Mucosa of descending colon (tissue), 3 donors: ENCODE measurements at regions of chr1 and their contacts with region 1.

Region 1: GRCh38 chr1:206635080-206635977 is at the start of gene DYRK3:
- DNase-seq: peak; percentile 94 to 96 (median 96)
- ATAC-seq: peak; percentile 99
- H3K4me3 ChIP-seq: peak within 1 kb of the TSS; percentile 48
- H3K4me1 ChIP-seq: peaks cover 12% of the 10 kb centered on the region
- CTCF ChIP-seq: peak; percentile 11
- total RNA-seq, gene DYRK3: 0.61 to 4.7 (median 1.4) TPM

Region 2: GRCh38 chr1:206524739-206525369 is 110.5 kb before region 1 on chr1:
- intact Hi-C with region 1: no loop called
- DNase-seq: no peak
- ATAC-seq: peak; percentile 67
- H3K4me3 ChIP-seq: no peak overlapping the region
- H3K4me1 ChIP-seq: no peaks in the 10 kb centered on the region
- CTCF ChIP-seq: no peak

Region 3: DNA sequence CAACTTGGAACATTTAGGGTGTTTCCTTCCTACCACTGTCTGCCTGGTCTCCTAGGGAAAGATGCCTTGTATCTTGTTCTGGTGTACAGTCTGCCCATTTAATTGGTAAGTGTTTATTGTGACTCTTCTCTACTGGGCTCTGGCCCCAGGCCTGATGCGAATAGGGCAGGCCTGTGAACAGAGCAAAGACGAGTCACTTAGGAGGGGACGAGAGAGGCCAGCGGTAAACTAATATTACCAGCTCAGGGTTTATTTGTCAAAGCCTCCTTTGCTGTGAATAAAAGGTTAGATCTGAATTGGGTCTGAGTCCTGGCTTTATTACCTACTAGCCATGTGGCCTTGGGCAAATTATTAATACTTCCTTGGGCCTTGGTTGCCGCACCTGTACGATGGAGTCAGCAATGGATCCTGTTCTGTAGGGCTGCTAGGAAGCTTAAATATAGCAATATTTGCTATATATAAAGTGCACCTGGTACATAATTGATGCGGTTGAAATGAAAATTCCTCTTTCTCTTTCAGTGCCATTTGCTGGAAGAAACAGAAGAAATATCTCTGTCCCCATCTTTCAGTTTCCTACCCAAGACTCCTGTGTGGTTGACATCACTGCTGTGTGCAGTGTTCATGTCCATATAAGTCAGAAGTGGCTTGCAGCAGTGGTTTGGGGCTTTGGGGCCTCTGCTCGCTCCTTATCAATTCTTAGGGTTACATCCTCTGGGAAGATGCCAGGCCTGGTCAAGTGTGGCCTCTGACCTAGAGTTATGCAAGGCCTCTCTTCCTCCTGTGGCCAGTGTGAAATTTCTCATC is 81.7 kb after region 1 on chr1:
- intact Hi-C with region 1: loop called in 1 of 2 experiments (anchors 10 kb)
- DNase-seq: peak in 1 of 3 donors; percentile 32
- ATAC-seq: peak; percentile 23
- H3K4me3 ChIP-seq: no peak overlapping the region
- H3K4me1 ChIP-seq: peaks cover 38% of the 10 kb centered on the region
- CTCF ChIP-seq: no peak